ENCODE measurements at regions of chr14 and their contacts with region 1.

Region 1: GRCh38 chr14:34982417-34983147 is at the start of gene SRP54:
- DNase-seq: peak; percentile 97 to 100 (median 100)
- ATAC-seq: peak; percentile 96
- H3K4me3 ChIP-seq: peak within 1 kb of the TSS; percentile 82
- H3K4me3 Mint-ChIP-seq: no peak within 1 kb of the TSS
- H3K27ac ChIP-seq: peak within 1 kb of the TSS; percentile 98
- H3K27ac Mint-ChIP-seq: no peak within 1 kb of the TSS
- H3K4me1 ChIP-seq: peaks cover 22% of the 10 kb centered on the region in 2 donors
- H3K4me1 Mint-ChIP-seq: peaks cover 0 to 30% (median 9%) of the 10 kb centered on the region in 7 donors
- H3K27me3 ChIP-seq: no peaks in the 10 kb centered on the region
- H3K27me3 Mint-ChIP-seq: no peaks in the 10 kb centered on the region
- total RNA-seq, gene SRP54: 35.8 to 61.4 (median 52.0) TPM

Region 2: DNA sequence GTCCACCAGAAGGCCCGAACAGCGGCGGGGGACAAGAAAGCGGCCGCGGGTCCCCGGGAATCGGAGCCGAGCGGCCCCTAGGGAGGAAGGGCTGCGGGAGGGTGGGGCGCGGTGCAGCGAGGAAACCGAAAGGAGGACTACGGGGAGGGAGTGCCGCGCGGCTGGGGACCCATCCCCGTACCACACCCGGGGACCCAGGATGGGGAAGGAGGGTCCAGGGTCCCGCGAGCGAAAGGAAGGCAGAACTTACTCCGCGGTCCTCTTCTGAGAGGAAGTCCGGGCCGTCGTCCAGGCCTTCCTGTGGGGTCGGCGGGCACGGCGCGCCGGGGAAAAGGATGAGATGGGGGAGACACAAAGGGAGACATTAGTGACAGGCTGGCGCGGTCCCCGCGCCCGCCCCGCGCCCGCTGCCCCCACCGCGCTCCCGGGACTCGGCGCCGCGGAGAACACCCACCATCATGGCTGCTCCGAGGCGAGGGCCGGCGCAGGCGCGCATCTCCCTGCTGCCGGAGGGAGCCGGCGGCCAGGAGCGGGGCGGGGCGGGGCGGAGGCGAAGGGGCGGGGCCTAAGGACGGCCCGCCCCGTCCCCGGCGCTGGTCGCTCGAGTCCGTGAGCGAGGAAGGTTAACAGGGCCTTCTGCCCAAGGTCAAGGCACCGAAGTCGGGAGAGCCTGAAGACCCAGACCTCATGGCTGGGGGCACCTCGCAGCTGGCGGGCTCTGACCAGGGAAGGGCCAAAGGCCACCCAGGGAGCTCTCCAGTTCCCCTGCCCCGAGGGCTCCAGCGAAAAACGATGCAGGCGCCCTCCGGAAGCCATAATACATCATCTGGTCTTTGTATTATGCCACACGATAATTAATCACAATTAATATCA is 352.7 kb before region 1 on chr14 and contains the start of gene SNX6:
- CTCF ChIA-PET with region 1: no interaction called
- POLR2A ChIA-PET with region 1: interaction called, 4 read pairs
- intact Hi-C with region 1: loop called (anchors 1 kb)
- DNase-seq: peak; percentile 75 to 87 (median 83)
- ATAC-seq: peak; percentile 100
- H3K4me3 ChIP-seq: peak within 1 kb of the TSS; percentile 72
- H3K4me3 Mint-ChIP-seq: peak within 1 kb of the TSS; percentile 89 to 100 (median 98)
- H3K27ac ChIP-seq: peak within 1 kb of the TSS; percentile 98
- H3K27ac Mint-ChIP-seq: peak within 1 kb of the TSS; percentile 92 to 97 (median 96)
- H3K4me1 ChIP-seq: peaks cover 17 to 20% of the 10 kb centered on the region in 2 donors
- H3K4me1 Mint-ChIP-seq: peaks cover 6 to 49% (median 33%) of the 10 kb centered on the region in 7 donors
- H3K27me3 ChIP-seq: no peaks in the 10 kb centered on the region
- H3K27me3 Mint-ChIP-seq: peaks cover 0 to 18% (median 0%) of the 10 kb centered on the region in 5 donors
- total RNA-seq, gene SNX6: 56.6 to 78.9 (median 59.7) TPM

Region 3: GRCh38 chr14:34857689-34858449 is 124.7 kb before region 1 on chr14:
- CTCF ChIA-PET with region 1: interaction called, 4 read pairs
- POLR2A ChIA-PET with region 1: interaction called, 6 read pairs
- intact Hi-C with region 1: loop called in 1 of 2 experiments (anchors 1 kb)
- DNase-seq: peak in 7 of 9 donors; percentile 20 to 76 (median 63)
- ATAC-seq: peak; percentile 84
- H3K4me3 ChIP-seq: no peak overlapping the region
- H3K4me3 Mint-ChIP-seq: peak overlapping the region; percentile 19 to 78 (median 48)
- H3K27ac ChIP-seq: no peak overlapping the region
- H3K27ac Mint-ChIP-seq: peak overlapping the region; percentile 41 to 92 (median 79)
- H3K4me1 ChIP-seq: peaks cover 7 to 25% of the 10 kb centered on the region in 2 donors
- H3K4me1 Mint-ChIP-seq: peaks cover 17 to 64% (median 48%) of the 10 kb centered on the region in 7 donors
- H3K27me3 ChIP-seq: no peaks in the 10 kb centered on the region
- H3K27me3 Mint-ChIP-seq: no peaks in the 10 kb centered on the region

Region 4: GRCh38 chr14:34931206-34931605 is 51.4 kb before region 1 on chr14:
- CTCF ChIA-PET with region 1: interaction called, 9 read pairs
- POLR2A ChIA-PET with region 1: interaction called, 28 read pairs
- intact Hi-C with region 1: loop called (anchors 1 kb)
- DNase-seq: peak in 7 of 9 donors; percentile 69 to 89 (median 83)
- ATAC-seq: peak; percentile 95
- H3K4me3 ChIP-seq: peak overlapping the region; percentile 22
- H3K4me3 Mint-ChIP-seq: peak overlapping the region; percentile 31 to 87 (median 76)
- H3K27ac ChIP-seq: peak overlapping the region; percentile 84
- H3K27ac Mint-ChIP-seq: peak overlapping the region; percentile 96 to 100 (median 98)
- H3K4me1 ChIP-seq: peaks cover 28 to 30% of the 10 kb centered on the region in 2 donors
- H3K4me1 Mint-ChIP-seq: peaks cover 15 to 44% (median 37%) of the 10 kb centered on the region in 7 donors
- H3K27me3 ChIP-seq: no peaks in the 10 kb centered on the region
- H3K27me3 Mint-ChIP-seq: no peaks in the 10 kb centered on the region

Region 5: DNA sequence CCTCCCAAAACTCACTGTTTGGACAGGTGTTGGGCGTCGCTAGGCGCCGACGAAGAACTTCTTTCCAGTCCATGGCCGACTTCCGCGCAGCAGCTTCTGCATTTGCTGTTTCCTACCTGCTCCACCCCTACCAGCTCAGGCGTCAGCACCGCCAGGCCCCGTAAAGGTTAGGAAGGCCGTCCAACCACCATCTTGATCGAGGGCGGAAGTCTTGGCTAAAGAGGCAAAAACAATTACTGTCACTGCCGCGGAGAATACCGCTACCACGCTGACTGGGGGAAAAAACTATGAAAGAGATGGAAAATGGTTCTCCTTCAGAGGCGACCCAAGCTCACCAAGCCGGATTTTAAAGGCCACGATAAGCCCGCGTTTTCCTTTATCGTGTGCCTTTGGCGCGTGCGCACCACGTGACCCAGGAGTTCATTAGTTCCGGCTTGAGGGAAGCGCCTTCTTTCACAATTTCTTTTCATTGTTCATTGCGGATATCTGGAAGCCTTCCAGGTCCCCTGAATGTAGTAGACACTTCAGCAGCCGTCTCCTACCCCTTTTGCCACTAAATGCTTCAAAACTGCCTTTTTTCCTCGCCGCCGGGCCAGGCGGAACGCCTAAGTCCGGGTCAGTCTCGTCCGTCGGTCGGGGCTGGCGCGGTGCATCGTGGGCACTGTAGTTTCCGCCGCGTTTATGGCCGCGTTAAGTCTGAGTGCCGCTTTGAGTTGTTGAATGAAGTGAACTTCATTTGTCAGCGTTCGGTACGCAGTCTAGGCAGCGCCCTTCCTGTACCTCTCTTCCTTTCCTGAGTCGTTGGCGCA is 139.5 kb after region 1 on chr14 and contains the starts of genes PPP2R3C and PRORP:
- CTCF ChIA-PET with region 1: no interaction called
- POLR2A ChIA-PET with region 1: interaction called, 25 read pairs
- intact Hi-C with region 1: loop called (anchors 1 kb)
- DNase-seq: peak; percentile 80 to 96 (median 93)
- ATAC-seq: peak; percentile 90
- H3K4me3 ChIP-seq: peak within 1 kb of the TSS; percentile 86
- H3K4me3 Mint-ChIP-seq: peak within 1 kb of the TSS; percentile 89 to 100 (median 99)
- H3K27ac ChIP-seq: peak within 1 kb of the TSS; percentile 97
- H3K27ac Mint-ChIP-seq: peak within 1 kb of the TSS; percentile 99 to 100 (median 100)
- H3K4me1 ChIP-seq: peaks cover 16 to 22% of the 10 kb centered on the region in 2 donors
- H3K4me1 Mint-ChIP-seq: peaks cover 39 to 85% (median 73%) of the 10 kb centered on the region in 7 donors
- H3K27me3 ChIP-seq: no peaks in the 10 kb centered on the region
- H3K27me3 Mint-ChIP-seq: peaks cover 0 to 3% (median 0%) of the 10 kb centered on the region in 5 donors
- total RNA-seq, gene PPP2R3C: 31.4 to 43.3 (median 33.5) TPM
- total RNA-seq, gene PRORP: 31.2 to 40.9 (median 38.4) TPM

Region 6: DNA sequence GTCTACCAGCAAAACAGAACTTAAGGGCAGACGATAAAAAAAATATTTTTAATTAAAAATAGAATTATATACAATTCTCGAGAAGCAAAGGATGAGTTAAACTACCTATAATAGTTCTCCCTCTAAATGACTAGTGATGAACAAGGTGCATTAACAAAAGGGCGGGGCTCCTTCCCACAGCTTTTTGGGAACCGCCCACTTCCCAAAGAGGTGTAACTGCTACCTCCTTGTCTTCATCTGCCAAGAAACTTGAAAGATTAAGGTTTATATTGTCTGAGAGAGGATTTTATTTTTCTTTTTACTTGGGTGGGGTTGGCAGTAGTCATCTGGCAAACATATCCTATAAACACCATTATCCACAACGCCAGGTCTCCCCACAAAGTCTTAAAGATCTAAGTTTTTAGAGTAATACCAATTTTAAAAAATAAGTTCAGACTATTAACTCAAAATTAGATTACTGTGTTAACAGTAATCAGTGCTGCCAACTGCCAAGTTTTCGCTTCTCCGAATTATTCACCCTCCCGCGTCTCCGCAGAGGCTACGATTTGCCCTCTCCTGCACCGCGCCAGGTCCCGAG is 825.6 kb after region 1 on chr14:
- CTCF ChIA-PET with region 1: no interaction called
- POLR2A ChIA-PET with region 1: no interaction called
- intact Hi-C with region 1: loop called in 1 of 2 experiments (anchors 1 kb)
- DNase-seq: peak in 1 of 9 donors; percentile 28
- ATAC-seq: no peak
- H3K4me3 ChIP-seq: peak overlapping the region; percentile 80
- H3K4me3 Mint-ChIP-seq: peak overlapping the region; percentile 85 to 99 (median 98)
- H3K27ac ChIP-seq: peak overlapping the region; percentile 77
- H3K27ac Mint-ChIP-seq: peak overlapping the region; percentile 80 to 97 (median 96)
- H3K4me1 ChIP-seq: peaks cover 14 to 16% of the 10 kb centered on the region in 2 donors
- H3K4me1 Mint-ChIP-seq: peaks cover 18 to 55% (median 34%) of the 10 kb centered on the region in 7 donors
- H3K27me3 ChIP-seq: no peaks in the 10 kb centered on the region
- H3K27me3 Mint-ChIP-seq: peaks cover 0 to 6% (median 0%) of the 10 kb centered on the region in 5 donors

Measured in naive thymus-derived CD4-positive, alpha-beta T cell (primary cell).